Activated CD4-positive, alpha-beta T cell treated with anti-CD3 and anti-CD28 coated beads for 36 hours (primary cell): ENCODE measurements at regions of chr4 and their contacts with region 1.

Region 1: GRCh38 chr4:7506119-7506518 is 71.4 kb upstream of the PSAPL1 start:
- DNase-seq: no peak
- ATAC-seq: no peak
- H3K4me3 Mint-ChIP-seq: no peak overlapping the region
- H3K27ac Mint-ChIP-seq: no peak overlapping the region
- H3K4me1 Mint-ChIP-seq: no peaks in the 10 kb centered on the region
- H3K27me3 Mint-ChIP-seq: peaks cover 12% of the 10 kb centered on the region

Region 2: GRCh38 chr4:7392438-7393421 is 113.4 kb before region 1 on chr4:
- CTCF ChIA-PET with region 1: no interaction called
- POLR2A ChIA-PET with region 1: no interaction called
- intact Hi-C with region 1: no loop called
- DNase-seq: no peak
- ATAC-seq: no peak
- H3K4me3 Mint-ChIP-seq: no peak overlapping the region
- H3K27ac Mint-ChIP-seq: no peak overlapping the region
- H3K4me1 Mint-ChIP-seq: no peaks in the 10 kb centered on the region
- H3K27me3 Mint-ChIP-seq: peaks cover 9% of the 10 kb centered on the region

Region 3: DNA sequence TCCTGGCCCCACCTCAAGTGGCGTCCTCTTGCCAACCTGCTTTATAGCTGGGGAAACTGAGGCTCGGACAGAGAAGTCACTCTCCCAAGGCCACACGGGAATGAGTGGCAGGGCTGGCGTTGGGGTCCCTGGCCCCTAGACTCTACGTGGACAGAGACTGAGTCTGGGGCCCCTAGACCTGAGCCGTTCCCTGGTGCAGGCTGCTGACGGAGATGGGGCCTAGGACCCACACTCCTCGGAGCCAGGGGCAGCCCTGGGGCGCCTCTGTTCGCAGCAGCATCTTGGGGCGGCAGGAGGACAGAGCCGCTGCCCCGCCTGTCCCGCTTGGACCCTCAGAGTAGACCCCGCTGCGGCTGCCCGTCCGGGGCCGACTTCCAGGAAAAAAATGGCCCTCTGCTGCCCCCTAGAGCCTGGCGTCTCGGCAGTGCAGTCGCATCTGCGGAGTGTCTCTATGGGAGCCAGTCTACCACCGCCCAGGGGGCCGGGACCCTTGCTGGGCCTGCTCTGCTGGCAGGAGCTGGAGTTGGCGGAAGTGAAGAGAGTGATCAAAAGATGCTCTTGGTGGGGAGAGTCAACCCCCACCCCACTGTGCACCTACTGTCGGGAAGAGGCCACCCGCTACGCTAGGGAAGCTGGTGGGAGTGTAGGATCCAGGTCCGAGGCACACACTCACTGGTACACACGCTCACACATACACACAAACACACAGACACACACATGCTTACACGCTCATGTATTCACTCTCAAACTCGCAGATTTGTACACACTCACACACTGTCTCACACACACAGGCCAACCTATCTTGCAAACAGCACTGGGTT is 213.4 kb after region 1 on chr4:
- CTCF ChIA-PET with region 1: no interaction called
- POLR2A ChIA-PET with region 1: no interaction called
- intact Hi-C with region 1: loop called in 1 of 2 experiments (anchors 10 kb)
- DNase-seq: peak; percentile 82
- ATAC-seq: peak; percentile 82
- H3K4me3 Mint-ChIP-seq: no peak overlapping the region
- H3K27ac Mint-ChIP-seq: no peak overlapping the region
- H3K4me1 Mint-ChIP-seq: no peaks in the 10 kb centered on the region
- H3K27me3 Mint-ChIP-seq: peaks cover 11% of the 10 kb centered on the region

Region 4: DNA sequence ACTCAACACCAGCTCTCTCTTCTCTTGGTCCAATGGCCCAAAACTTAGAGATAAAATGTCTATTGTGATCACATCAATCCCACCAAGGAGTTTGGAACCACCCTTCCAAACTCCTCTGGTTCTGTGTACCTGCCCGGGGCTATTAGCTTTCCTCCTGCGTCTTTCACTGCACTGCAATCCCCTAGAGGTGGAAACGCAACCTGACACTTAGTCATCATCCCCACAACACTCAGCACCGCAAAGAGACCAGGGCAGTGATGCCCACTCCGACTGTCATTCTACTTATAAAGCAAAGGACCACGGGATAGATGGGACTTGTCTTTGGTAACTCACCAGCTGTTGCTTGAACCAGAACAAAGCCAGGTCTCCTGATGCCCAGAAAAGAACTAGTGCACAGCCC is 411.5 kb after region 1 on chr4:
- CTCF ChIA-PET with region 1: no interaction called
- POLR2A ChIA-PET with region 1: no interaction called
- intact Hi-C with region 1: no loop called
- DNase-seq: no peak
- ATAC-seq: no peak
- H3K4me3 Mint-ChIP-seq: no peak overlapping the region
- H3K27ac Mint-ChIP-seq: no peak overlapping the region
- H3K4me1 Mint-ChIP-seq: peaks cover 23% of the 10 kb centered on the region
- H3K27me3 Mint-ChIP-seq: no peaks in the 10 kb centered on the region

Region 5: DNA sequence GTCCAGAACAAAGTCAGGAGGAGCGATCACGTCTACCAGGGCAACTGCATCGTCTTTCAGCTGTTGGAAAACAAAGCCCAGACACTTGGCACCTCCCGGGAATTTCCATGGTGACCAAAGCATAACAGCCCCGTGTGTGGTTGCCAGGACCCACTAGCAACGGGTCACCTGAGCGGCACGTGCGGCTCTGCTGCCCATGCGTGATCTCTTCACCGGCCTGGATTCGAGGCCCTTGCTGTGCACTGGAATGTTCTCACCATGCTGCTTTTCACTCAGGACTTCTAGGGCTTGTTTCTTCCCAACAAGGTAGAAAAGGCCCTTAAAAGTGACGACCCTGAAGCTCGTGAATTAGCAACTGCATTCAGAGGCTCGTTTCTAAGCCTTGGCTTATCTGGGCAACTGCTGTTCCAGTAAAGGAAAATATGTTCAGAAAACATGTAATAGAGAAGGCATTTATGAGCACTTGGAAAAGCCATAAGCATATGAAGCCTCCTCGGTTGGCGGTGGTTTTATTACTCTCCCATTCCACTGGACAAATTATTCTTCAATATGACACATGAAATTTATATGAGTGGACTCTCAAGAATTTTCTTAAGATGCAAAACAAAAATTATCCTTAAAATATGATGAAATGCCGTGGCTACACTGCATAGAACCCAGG is 864.9 kb after region 1 on chr4:
- CTCF ChIA-PET with region 1: no interaction called
- POLR2A ChIA-PET with region 1: no interaction called
- intact Hi-C with region 1: no loop called
- DNase-seq: no peak
- ATAC-seq: no peak
- H3K4me3 Mint-ChIP-seq: no peak overlapping the region
- H3K27ac Mint-ChIP-seq: no peak overlapping the region
- H3K4me1 Mint-ChIP-seq: no peaks in the 10 kb centered on the region
- H3K27me3 Mint-ChIP-seq: no peaks in the 10 kb centered on the region